ENCODE measurements at regions of chr3 and their contacts with region 1.

Region 1: DNA sequence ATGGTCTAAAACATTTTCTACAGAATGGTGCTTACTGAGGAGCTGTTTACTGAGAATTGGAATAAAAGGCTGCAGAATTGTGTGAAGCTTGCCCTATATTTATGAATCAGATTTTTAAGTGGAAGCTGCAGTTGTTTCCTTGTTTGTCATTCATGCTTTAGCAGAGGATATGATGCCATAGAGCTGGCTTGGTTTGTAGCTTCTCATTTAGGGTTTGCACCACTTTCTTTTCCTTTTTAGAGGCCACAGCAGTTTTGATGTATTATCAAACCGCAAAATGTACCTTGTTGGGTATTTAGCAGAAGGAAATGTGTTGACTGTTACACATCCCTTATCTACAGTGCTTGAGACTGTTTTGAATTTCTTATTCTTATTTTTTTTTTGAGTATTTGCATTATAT is 66.2 kb downstream of the RASA2 start:
- DNase-seq: no peak
- ATAC-seq: peak in 4 of 8 donors; percentile 16 to 44 (median 36)
- H3K4me3 ChIP-seq: no peak overlapping the region
- H3K27ac ChIP-seq: peak overlapping the region in 1 of 10 donors; percentile 51
- H3K4me1 ChIP-seq: peaks cover 0 to 42% (median 11%) of the 10 kb centered on the region in 9 donors
- H3K27me3 ChIP-seq: no peaks in the 10 kb centered on the region
- CTCF ChIP-seq: no peak

Region 2: GRCh38 chr3:141303481-141304223 is 249.4 kb before region 1 on chr3:
- intact Hi-C with region 1: loop called in 1 of 10 experiments (anchors 10 kb)
- DNase-seq: peak in 1 of 2 donors; percentile 76
- ATAC-seq: peak; percentile 39 to 90 (median 71)
- H3K4me3 ChIP-seq: no peak overlapping the region
- H3K27ac ChIP-seq: peak overlapping the region in 3 of 10 donors; percentile 3 to 51 (median 38)
- H3K4me1 ChIP-seq: peaks cover 0 to 27% (median 10%) of the 10 kb centered on the region in 9 donors
- H3K27me3 ChIP-seq: no peaks in the 10 kb centered on the region
- CTCF ChIP-seq: peak; percentile 79 to 88 (median 82)

Region 3: DNA sequence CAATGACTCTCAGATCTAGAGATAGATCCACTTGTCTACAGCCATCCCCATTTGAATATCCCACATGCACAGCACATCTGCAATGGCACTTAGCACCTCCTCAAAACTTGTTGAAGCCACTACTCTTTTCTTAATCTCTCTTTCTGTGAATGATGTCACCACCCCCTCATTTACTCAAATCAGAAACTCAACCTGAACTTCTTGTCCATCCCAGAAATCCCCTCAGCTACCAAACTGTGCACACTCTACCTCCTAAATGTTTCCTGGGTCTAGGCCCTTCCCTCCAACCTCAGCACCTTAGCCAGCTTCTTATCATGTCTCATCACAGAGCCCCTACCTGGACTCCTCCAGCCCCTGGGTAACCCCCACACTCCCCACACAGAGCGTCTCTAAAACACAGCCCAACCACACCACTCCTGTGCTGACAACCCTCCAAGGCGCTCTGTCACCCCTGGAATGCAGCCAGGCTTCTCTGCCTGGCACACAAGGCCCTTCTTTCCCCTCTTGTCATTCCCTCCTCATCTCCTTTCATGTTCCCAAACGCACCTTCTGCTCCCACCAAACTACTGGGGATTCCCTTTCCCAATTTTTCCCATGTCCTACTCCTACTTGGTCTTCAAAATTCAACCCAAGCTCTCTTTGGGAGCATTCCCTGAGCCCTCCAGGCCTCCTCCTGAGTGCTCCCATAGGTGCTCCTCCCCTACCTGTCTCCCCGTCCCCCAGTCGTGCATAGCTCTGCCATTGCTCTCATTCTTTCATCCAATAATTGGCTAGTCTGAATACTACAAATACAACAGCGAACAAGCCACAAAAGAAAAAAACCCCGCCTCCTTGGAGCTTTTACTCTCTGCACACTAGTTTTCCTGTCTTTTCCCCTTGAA is 224.5 kb before region 1 on chr3:
- intact Hi-C with region 1: loop called in 1 of 10 experiments (anchors 10 kb)
- DNase-seq: peak in 1 of 2 donors; percentile 43
- ATAC-seq: peak in 2 of 8 donors; percentile 36 to 51
- H3K4me3 ChIP-seq: no peak overlapping the region
- H3K27ac ChIP-seq: no peak overlapping the region
- H3K4me1 ChIP-seq: peaks cover 0 to 31% (median 13%) of the 10 kb centered on the region in 9 donors
- H3K27me3 ChIP-seq: no peaks in the 10 kb centered on the region
- CTCF ChIP-seq: no peak

Region 4: GRCh38 chr3:141353652-141354495 is 199.2 kb before region 1 on chr3:
- intact Hi-C with region 1: loop called in 2 of 10 experiments (anchors 5 to 10 kb)
- DNase-seq: no peak
- ATAC-seq: peak in 4 of 8 donors; percentile 27 to 88 (median 66)
- H3K4me3 ChIP-seq: no peak overlapping the region
- H3K27ac ChIP-seq: no peak overlapping the region
- H3K4me1 ChIP-seq: no peaks in the 10 kb centered on the region
- H3K27me3 ChIP-seq: no peaks in the 10 kb centered on the region
- CTCF ChIP-seq: no peak

Region 5: GRCh38 chr3:141499965-141500364 is 53.1 kb before region 1 on chr3:
- intact Hi-C with region 1: loop called in 1 of 10 experiments (anchors 5 kb)
- DNase-seq: no peak
- ATAC-seq: no peak
- H3K4me3 ChIP-seq: no peak overlapping the region
- H3K27ac ChIP-seq: peak overlapping the region in 1 of 10 donors; percentile 87
- H3K4me1 ChIP-seq: peaks cover 0 to 46% (median 12%) of the 10 kb centered on the region in 9 donors
- H3K27me3 ChIP-seq: no peaks in the 10 kb centered on the region
- CTCF ChIP-seq: no peak

Measured in heart right ventricle (tissue), 16 donors.